ENCODE measurements at regions of chr13 and their contacts with region 1.

Region 1: GRCh38 chr13:110819203-110820014 is 95.5 kb downstream of the ANKRD10 start:
- DNase-seq: peak; percentile 66
- ATAC-seq: peak; percentile 98
- H3K4me3 ChIP-seq: peak overlapping the region in 1 of 2 experiments; percentile 15; a peak in 2 of 4 replicates
- H3K27ac ChIP-seq: no peak overlapping the region
- H3K4me1 ChIP-seq: peaks cover 4 to 8% of the 10 kb centered on the region in 2 experiments; a peak in 3 of 4 replicates
- H3K27me3 ChIP-seq: no peaks in the 10 kb centered on the region
- CTCF ChIP-seq: peak; percentile 80 to 99 (median 98)
- POLR2A ChIP-seq: no peak
- RAD21 ChIP-seq: peak; percentile 94

Region 2: DNA sequence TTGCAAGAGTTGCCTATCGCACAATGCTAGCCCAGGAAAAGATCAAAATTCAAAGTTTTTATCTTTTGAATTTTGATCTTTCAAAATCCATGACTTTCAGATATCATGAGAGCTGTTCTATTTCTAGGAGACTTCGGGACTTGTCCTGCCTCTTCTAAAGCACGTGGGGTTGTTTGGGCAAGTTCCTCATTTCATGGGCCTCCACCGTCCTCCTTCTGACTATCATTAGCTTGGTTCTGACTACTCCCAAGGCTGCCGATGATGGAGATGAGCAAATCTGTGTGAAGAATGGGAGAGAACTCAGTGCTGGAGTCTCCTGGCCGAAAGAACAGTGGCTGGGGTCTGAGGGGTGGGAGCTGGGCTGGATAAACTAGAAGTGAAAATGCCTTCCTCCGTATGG is 598.9 kb before region 1 on chr13:
- CTCF ChIA-PET with region 1: no interaction called
- POLR2A ChIA-PET with region 1: interaction called, 3 read pairs
- RAD21 ChIA-PET with region 1: no interaction called
- intact Hi-C with region 1: loop called (anchors 5 kb)
- DNase-seq: no peak
- ATAC-seq: no peak
- H3K4me3 ChIP-seq: no peak overlapping the region
- H3K27ac ChIP-seq: no peak overlapping the region
- H3K4me1 ChIP-seq: peaks cover 0 to 4% of the 10 kb centered on the region in 2 experiments; a peak in 1 of 4 replicates
- H3K27me3 ChIP-seq: no peaks in the 10 kb centered on the region
- CTCF ChIP-seq: no peak
- POLR2A ChIP-seq: no peak
- RAD21 ChIP-seq: no peak

Region 3: DNA sequence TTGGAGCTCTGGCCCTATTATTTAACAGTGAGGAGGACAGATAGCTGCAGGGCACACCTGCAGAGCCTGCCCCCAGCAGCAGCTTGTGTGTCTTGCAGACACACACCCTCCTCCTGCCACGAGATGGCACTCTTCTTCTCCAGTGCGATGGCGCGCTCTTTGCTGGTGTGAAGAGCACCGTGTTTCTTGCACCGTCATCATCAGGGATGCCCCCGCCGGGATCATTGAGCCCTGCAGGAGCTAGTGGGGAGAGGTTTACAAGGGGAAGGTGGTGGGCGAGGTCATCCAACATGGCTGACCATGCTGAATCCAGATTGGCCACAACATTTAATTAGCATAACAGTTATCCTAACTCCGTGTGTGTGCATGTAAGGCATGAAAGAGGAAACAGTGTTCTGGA is 363.5 kb before region 1 on chr13:
- CTCF ChIA-PET with region 1: interaction called, 5 read pairs
- POLR2A ChIA-PET with region 1: no interaction called
- RAD21 ChIA-PET with region 1: interaction called in 1 of 2 experiments, 3 read pairs
- intact Hi-C with region 1: loop called (anchors 1 kb)
- DNase-seq: peak; percentile 81
- ATAC-seq: peak; percentile 98
- H3K4me3 ChIP-seq: peak overlapping the region; percentile 4 to 18; a peak in 1 of 4 replicates
- H3K27ac ChIP-seq: no peak overlapping the region
- H3K4me1 ChIP-seq: peaks cover 0 to 17% of the 10 kb centered on the region in 2 experiments; a peak in 3 of 4 replicates
- H3K27me3 ChIP-seq: no peaks in the 10 kb centered on the region
- CTCF ChIP-seq: peak; percentile 92 to 94 (median 93)
- POLR2A ChIP-seq: no peak
- RAD21 ChIP-seq: peak; percentile 96

Region 4: GRCh38 chr13:110593430-110594130 is 225.8 kb before region 1 on chr13:
- CTCF ChIA-PET with region 1: interaction called, 5 read pairs
- POLR2A ChIA-PET with region 1: no interaction called
- RAD21 ChIA-PET with region 1: no interaction called
- intact Hi-C with region 1: loop called (anchors 2 kb)
- DNase-seq: peak; percentile 50
- ATAC-seq: peak; percentile 93
- H3K4me3 ChIP-seq: no peak overlapping the region
- H3K27ac ChIP-seq: no peak overlapping the region
- H3K4me1 ChIP-seq: peaks cover 2 to 5% of the 10 kb centered on the region in 2 experiments; a peak in 2 of 4 replicates
- H3K27me3 ChIP-seq: no peaks in the 10 kb centered on the region
- CTCF ChIP-seq: peak; percentile 48 to 72 (median 70); a peak in 5 of 6 replicates
- POLR2A ChIP-seq: no peak
- RAD21 ChIP-seq: peak; percentile 81

Region 5: DNA sequence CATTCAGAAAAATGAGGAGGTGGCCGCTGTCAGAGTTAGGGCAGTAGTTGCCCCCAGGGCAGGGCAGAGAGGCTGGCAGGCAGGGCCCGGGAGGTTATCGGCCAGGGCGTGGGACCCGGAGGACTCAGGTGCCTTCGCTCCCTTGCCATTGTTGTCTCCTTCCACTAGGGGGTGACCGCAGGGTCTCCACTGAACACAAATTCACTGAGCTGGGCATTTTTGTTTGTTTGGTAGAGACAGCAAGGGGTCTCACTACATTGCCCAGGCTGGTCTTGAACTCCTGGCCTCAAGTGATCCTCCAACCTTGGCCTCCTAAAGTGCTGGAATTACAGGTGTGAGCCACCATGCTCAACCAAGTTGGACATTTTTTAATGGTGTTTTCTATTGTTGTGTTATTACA is 138.6 kb before region 1 on chr13:
- CTCF ChIA-PET with region 1: interaction called, 5 read pairs
- POLR2A ChIA-PET with region 1: no interaction called
- RAD21 ChIA-PET with region 1: no interaction called
- intact Hi-C with region 1: loop called (anchors 5 kb)
- DNase-seq: peak; percentile 10
- ATAC-seq: peak; percentile 84
- H3K4me3 ChIP-seq: no peak overlapping the region
- H3K27ac ChIP-seq: no peak overlapping the region
- H3K4me1 ChIP-seq: no peaks in the 10 kb centered on the region
- H3K27me3 ChIP-seq: no peaks in the 10 kb centered on the region
- CTCF ChIP-seq: peak; percentile 29 to 67 (median 57); a peak in 5 of 6 replicates
- POLR2A ChIP-seq: no peak
- RAD21 ChIP-seq: peak; percentile 46

Region 6: GRCh38 chr13:110784704-110785103 is 34.7 kb before region 1 on chr13:
- CTCF ChIA-PET with region 1: no interaction called
- POLR2A ChIA-PET with region 1: no interaction called
- RAD21 ChIA-PET with region 1: no interaction called
- intact Hi-C with region 1: no loop called
- DNase-seq: no peak
- ATAC-seq: no peak
- H3K4me3 ChIP-seq: no peak overlapping the region
- H3K27ac ChIP-seq: no peak overlapping the region
- H3K4me1 ChIP-seq: no peaks in the 10 kb centered on the region
- H3K27me3 ChIP-seq: no peaks in the 10 kb centered on the region
- CTCF ChIP-seq: no peak
- POLR2A ChIP-seq: no peak
- RAD21 ChIP-seq: no peak

Region 7: GRCh38 chr13:111046590-111047141 is 227.3 kb after region 1 on chr13:
- CTCF ChIA-PET with region 1: no interaction called
- POLR2A ChIA-PET with region 1: no interaction called
- RAD21 ChIA-PET with region 1: no interaction called
- intact Hi-C with region 1: loop called (anchors 5 kb)
- DNase-seq: no peak
- ATAC-seq: no peak
- H3K4me3 ChIP-seq: no peak overlapping the region
- H3K27ac ChIP-seq: no peak overlapping the region
- H3K4me1 ChIP-seq: peaks cover 0 to 29% of the 10 kb centered on the region in 2 experiments; a peak in 2 of 4 replicates
- H3K27me3 ChIP-seq: no peaks in the 10 kb centered on the region
- CTCF ChIP-seq: peak in 1 of 3 experiments; percentile 32; a peak in 3 of 6 replicates
- POLR2A ChIP-seq: no peak
- RAD21 ChIP-seq: no peak

Measured in HCT116 (cell line).